HEK293 (cell line): ENCODE measurements at regions of chr15 and their contacts with region 1.

Region 1: DNA sequence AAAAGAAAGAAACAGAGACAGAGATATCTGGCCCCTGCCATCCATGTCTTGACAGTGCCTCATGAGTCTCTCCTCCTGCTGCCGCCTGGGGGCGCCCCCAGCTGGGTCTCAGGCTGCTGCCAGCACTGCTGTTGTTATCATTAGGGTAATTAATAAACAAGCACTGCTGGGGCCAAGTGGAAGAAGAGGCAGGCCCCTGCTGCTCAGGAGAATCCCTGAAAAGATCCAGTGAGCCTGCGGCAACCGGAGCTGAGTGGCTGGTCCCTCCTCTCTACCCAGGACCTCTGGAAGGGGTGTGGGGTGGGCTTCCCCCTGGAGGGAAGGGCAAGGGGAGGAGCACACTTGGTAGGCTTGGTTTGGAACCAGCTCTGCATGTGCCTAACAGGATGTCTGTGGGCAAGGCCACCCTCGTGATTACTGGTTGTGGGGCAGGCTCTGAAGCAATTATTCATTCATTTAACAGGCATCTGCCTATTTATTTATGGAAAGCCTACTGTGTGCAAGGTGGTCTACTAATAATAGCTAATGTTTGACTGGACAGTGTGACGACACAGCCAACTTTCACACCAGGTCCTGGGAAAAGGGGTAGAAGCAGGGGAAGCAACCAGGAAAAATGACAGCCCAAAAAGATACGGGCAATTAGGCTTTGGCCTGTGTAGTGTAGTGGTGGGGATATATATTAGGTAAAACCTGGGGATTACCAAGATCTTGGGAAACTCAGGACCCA is 1.2 kb upstream of the TYRO3 start:
- H3K4me3 ChIP-seq: no peak overlapping the region
- H3K27ac ChIP-seq: peak overlapping the region; percentile 51; the same call in 1 of the 2 replicates
- H3K4me1 ChIP-seq: peaks cover 5% of the 10 kb centered on the region; the same call in 1 of the 2 replicates
- CTCF ChIP-seq: peak; percentile 63

Region 2: GRCh38 chr15:41530363-41530956 is 27.4 kb before region 1 on chr15:
- CTCF ChIA-PET with region 1: no interaction called
- POLR2A ChIA-PET with region 1: no interaction called
- H3K4me3 ChIP-seq: no peak overlapping the region
- H3K27ac ChIP-seq: no peak overlapping the region
- H3K4me1 ChIP-seq: no peaks in the 10 kb centered on the region
- CTCF ChIP-seq: no peak

Region 3: GRCh38 chr15:41544650-41545015 is 13.2 kb before region 1 on chr15:
- CTCF ChIA-PET with region 1: interaction called, 4 read pairs
- POLR2A ChIA-PET with region 1: interaction called, 15 read pairs
- H3K4me3 ChIP-seq: no peak overlapping the region
- H3K27ac ChIP-seq: no peak overlapping the region
- H3K4me1 ChIP-seq: no peaks in the 10 kb centered on the region
- CTCF ChIP-seq: no peak

Region 4: DNA sequence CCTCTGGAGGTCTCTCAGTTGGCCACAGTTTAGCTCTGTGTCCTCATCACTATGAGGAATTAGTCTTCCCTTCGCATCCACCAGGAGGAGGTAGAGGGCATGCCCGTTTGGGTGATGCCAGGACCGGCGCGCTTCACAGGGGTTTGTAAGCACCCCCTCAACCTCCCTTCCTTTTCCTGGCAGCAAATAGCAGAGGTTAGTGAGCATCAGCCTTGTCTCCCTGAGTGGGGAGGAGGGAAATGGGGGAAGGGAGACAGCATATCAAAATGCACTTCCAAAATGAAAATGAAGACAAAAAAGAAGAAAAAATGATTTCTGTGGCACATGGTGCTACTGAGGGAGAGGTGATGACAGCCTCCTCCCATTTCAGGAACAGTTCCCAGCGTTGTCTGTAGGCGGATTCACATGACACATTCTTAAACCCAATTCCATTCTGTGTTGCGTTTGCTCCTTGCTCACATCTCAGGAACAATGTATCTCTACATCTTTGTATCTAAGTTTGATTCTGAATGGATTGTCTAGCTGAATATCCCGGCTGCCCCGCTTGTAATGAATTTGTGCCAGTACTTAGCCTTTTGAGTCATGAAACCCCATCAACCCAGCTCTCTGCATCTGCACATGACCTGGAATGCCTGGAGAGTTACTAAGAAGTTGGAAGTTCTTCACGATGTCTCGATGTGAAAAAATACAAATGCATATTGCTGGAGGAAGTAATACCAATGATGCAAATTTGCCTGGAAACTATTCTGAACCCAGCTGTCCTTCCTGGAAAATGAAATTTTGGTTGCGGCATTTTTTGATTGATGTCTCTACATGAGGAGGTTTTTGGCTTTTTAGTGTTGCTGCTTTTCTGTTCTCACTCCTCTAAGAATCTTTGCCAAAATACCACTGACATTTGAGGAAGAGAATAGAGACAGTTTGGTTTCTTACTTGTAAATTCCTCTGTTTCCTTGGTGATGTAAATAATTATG is 46.4 kb after region 1 on chr15:
- CTCF ChIA-PET with region 1: interaction called, 11 read pairs
- POLR2A ChIA-PET with region 1: no interaction called
- H3K4me3 ChIP-seq: no peak overlapping the region
- H3K27ac ChIP-seq: no peak overlapping the region
- H3K4me1 ChIP-seq: no peaks in the 10 kb centered on the region
- CTCF ChIP-seq: peak; percentile 73; the same call in 1 of the 2 replicates